ENCODE measurements at regions of chr5 and their contacts with region 1.

Region 1: DNA sequence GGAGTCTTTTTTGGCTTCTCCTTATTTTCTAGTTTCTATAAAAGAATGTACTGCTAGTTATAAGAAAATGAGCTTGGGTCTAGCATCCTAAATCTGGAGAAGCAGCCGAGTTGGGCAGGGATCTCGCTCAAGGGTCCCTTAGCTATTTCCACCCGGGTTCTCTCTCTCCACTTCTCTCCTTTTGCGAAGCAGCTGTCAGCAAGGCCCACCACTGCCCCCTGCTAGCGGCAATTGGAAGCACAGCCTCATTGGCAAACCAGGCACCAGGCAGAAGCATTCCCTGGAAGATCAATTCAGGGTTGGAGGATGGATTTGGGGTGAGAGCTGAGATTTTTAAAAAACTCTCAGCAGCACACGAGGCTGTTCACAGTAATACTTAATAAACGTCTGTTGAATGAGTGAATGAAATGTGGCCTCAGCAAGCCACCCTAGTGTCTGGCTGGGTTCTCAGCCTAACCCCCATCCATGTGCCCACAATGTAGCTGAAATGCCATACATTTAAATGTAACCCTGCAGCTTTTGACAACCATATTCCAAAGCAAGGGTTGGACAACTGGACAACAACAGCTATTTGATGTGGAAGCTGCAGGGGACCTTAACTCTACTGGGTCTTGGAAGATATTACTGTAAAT is 34.6 kb upstream of the TNIP1 start:
- DNase-seq: peak; percentile 70
- ATAC-seq: peak; percentile 80
- H3K4me3 Mint-ChIP-seq: no peak overlapping the region
- H3K27ac Mint-ChIP-seq: peak overlapping the region; percentile 12
- H3K4me1 Mint-ChIP-seq: peaks cover 26% of the 10 kb centered on the region
- H3K27me3 Mint-ChIP-seq: no peaks in the 10 kb centered on the region
- CTCF ChIP-seq: peak; percentile 78

Region 2: GRCh38 chr5:151002250-151002649 is 113.1 kb before region 1 on chr5:
- CTCF ChIA-PET with region 1: interaction called, 4 read pairs
- POLR2A ChIA-PET with region 1: no interaction called
- intact Hi-C with region 1: loop called (anchors 1 kb)
- DNase-seq: no peak
- ATAC-seq: no peak
- H3K4me3 Mint-ChIP-seq: no peak overlapping the region
- H3K27ac Mint-ChIP-seq: no peak overlapping the region
- H3K4me1 Mint-ChIP-seq: no peaks in the 10 kb centered on the region
- H3K27me3 Mint-ChIP-seq: peaks cover 3% of the 10 kb centered on the region
- CTCF ChIP-seq: no peak

Region 3: DNA sequence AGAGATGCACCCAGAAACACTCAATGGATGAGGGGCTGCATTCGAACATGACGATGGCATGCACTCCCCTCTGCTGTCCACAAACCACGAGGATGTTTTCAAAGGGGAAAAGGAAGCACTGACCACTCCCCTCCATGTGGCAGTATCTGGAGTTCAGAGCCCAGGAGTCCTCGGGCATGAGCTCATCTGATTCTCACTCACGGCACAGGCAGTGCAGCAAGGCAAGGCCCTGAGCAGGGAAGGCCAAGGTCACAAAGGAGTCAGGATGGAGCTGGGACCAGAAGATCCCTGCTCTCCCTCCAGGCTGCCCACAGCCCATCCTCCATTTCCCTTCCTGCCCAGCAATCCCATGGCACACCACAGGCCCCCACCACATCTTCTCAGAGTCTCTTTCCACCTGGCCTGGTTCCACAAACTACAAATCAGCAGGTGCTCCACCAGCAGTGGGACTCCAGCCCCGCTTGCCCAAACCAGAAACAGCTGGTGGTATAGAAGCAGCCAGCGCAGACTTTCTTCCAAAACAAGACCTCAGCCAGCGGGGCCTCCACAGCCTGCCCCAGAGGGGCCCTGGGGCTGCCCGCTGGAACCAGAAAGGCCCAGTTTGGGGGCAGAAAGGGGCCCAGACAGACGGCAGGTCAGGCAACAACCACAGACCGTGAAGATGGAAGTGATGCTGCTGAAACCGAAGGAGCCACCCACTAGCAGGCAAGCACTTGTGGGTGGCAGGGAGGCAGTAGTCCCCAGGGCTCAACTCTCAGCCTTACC is 46.8 kb before region 1 on chr5:
- CTCF ChIA-PET with region 1: interaction called, 14 read pairs
- POLR2A ChIA-PET with region 1: interaction called, 7 read pairs
- intact Hi-C with region 1: no loop called
- DNase-seq: peak; percentile 62
- ATAC-seq: peak; percentile 86
- H3K4me3 Mint-ChIP-seq: peak overlapping the region; percentile 72
- H3K27ac Mint-ChIP-seq: peak overlapping the region; percentile 91
- H3K4me1 Mint-ChIP-seq: peaks cover 99% of the 10 kb centered on the region
- H3K27me3 Mint-ChIP-seq: no peaks in the 10 kb centered on the region
- CTCF ChIP-seq: no peak

Region 4: DNA sequence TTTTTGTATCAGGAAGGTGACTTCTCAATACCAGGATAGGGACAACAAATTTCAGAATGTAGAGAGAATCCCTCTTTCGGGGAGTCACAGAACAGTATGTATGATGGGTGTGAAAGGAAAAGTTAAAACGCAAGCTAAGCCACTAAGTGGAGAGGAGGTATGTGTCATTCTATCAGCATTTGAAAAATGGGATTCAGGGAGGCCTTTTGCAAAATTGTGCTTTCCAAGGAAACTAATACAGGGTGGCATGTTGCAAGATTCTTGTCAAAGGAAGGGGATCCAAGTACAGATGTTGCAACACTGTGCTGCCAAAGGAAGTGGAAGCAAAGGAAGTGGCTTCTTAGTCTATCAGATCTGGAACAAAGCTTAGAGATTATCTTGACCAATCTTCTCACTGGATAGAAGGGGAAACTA is 21.9 kb before region 1 on chr5:
- CTCF ChIA-PET with region 1: interaction called, 22 read pairs
- POLR2A ChIA-PET with region 1: interaction called, 8 read pairs
- intact Hi-C with region 1: loop called (anchors 1 kb)
- DNase-seq: no peak
- ATAC-seq: no peak
- H3K4me3 Mint-ChIP-seq: peak overlapping the region; percentile 81
- H3K27ac Mint-ChIP-seq: peak overlapping the region; percentile 94
- H3K4me1 Mint-ChIP-seq: peaks cover 74% of the 10 kb centered on the region
- H3K27me3 Mint-ChIP-seq: no peaks in the 10 kb centered on the region
- CTCF ChIP-seq: no peak

Region 5: GRCh38 chr5:151150471-151151262 is 35.3 kb after region 1 on chr5:
- CTCF ChIA-PET with region 1: interaction called, 15 read pairs
- POLR2A ChIA-PET with region 1: no interaction called
- intact Hi-C with region 1: no loop called
- DNase-seq: peak; percentile 32
- ATAC-seq: peak; percentile 62
- H3K4me3 Mint-ChIP-seq: peak overlapping the region; percentile 33
- H3K27ac Mint-ChIP-seq: peak overlapping the region; percentile 87
- H3K4me1 Mint-ChIP-seq: peaks cover 96% of the 10 kb centered on the region
- H3K27me3 Mint-ChIP-seq: no peaks in the 10 kb centered on the region
- CTCF ChIP-seq: no peak

Region 6: DNA sequence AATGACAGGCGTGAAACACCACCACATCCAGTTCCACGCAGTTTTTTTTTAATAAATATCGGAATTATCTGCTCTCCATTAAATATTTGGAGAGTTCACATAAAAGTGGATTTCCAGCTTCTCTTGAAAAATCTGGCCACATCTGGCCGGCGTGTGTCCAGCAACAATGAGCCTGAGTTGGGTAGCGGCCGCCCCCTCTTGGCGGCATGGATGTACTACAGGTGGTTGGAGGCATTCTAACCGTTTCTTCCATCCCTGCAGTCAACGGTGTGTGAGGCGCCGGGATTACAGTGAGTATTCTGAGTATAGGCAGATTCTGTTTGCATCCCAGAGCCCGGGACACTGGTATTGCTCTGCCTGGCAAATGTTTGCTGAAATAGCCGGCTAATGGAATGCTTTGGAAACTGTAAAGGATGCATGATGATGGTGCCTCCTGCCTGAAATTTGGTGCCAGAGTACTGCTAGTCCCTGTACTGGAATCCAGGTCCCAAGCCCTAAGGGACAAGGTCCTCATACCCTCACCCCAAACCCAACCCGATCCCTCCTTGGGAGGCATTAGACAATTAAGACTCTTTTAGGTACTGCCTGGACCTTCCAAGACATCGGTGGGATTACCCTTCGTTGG is 124.0 kb after region 1 on chr5:
- CTCF ChIA-PET with region 1: interaction called, 58 read pairs
- POLR2A ChIA-PET with region 1: interaction called, 9 read pairs
- intact Hi-C with region 1: loop called (anchors 1 kb)
- DNase-seq: peak; percentile 58
- ATAC-seq: peak; percentile 60
- H3K4me3 Mint-ChIP-seq: peak overlapping the region; percentile 77
- H3K27ac Mint-ChIP-seq: peak overlapping the region; percentile 72
- H3K4me1 Mint-ChIP-seq: peaks cover 95% of the 10 kb centered on the region
- H3K27me3 Mint-ChIP-seq: no peaks in the 10 kb centered on the region
- CTCF ChIP-seq: peak; percentile 85